ENCODE measurements at regions of chr19 and their contacts with region 1.

Region 1: DNA sequence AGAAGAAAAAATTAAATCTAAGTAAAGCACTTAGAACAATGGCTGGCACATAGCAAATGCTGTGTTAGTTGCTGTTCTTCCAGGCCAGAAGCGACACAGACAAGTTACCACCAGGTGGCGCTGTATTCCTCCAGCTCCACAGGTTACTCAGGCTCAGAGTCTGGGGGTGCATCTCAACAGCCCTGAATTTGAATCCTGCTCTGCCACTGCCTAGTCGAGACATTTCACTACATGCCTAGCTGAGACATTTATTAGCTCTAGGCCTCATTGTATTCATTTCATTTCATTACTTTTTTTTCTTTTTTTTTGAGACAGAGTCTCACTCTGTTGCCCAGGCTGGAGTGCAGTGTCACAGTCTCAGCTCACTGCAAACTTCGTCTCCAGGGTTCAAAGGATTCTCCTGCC is 16.4 kb upstream of the CYP2B6 start:
- DNase-seq: peak; percentile 62
- ATAC-seq: peak; percentile 58 to 79

Region 2: GRCh38 chr19:40941481-40942219 is 33.0 kb before region 1 on chr19:
- intact Hi-C with region 1: no loop called
- DNase-seq: no peak
- ATAC-seq: no peak

Region 3: GRCh38 chr19:41144403-41144802 is 169.8 kb after region 1 on chr19:
- intact Hi-C with region 1: loop called in 1 of 2 experiments (anchors 10 kb)
- DNase-seq: peak; percentile 84
- ATAC-seq: peak; percentile 69 to 78

Region 4: DNA sequence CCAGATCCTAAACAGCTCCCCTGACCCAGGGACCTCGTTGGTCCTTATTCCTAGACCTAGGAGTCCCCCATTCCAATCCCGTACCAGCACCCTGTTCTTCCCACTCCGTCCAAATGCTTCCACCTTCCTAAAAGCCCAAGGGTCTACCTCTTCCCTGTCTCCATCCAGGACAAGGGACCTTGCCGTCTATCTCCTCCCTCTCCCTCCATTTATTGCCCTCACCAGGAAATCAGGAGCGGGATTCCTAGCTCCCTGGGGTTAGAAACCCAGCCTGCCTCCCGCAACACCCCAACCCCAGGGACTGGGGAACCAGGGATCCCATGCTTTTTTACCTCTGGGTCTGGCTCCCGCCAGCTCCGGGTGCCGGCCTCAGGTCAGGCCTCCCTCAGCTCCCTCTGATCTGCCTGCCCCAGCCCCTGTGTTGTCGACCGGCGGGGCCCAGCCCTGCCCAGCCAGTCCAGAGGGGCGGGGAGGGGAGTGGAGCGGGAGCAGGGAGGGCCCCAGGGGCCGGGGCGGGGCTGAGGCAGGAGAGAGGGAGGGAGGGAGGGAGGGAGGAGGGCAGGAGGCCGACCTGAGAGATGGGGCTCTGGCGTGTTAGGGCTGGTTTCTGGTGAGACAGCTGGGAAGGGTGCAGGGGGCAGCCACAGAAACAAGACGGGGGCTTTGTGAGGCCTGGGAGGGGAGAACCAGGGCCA is 452.5 kb after region 1 on chr19 and contains the start of gene B3GNT8:
- intact Hi-C with region 1: no loop called
- DNase-seq: peak; percentile 87
- ATAC-seq: peak; percentile 88 to 92
- total RNA-seq, gene B3GNT8: 1.4 to 3.2 TPM

Measured in left cardiac atrium (tissue), 4 donors.